ENCODE measurements at regions of chr9 and their contacts with region 1.

Region 1: GRCh38 chr9:132507746-132508469 is 74.5 kb upstream of the BARHL1 start:
- DNase-seq: peak; percentile 83
- ATAC-seq: peak; percentile 90
- H3K4me3 Mint-ChIP-seq: no peak overlapping the region
- H3K27ac Mint-ChIP-seq: peak overlapping the region; percentile 71
- H3K4me1 Mint-ChIP-seq: peaks cover 23% of the 10 kb centered on the region
- H3K27me3 Mint-ChIP-seq: peaks cover 18% of the 10 kb centered on the region

Region 2: DNA sequence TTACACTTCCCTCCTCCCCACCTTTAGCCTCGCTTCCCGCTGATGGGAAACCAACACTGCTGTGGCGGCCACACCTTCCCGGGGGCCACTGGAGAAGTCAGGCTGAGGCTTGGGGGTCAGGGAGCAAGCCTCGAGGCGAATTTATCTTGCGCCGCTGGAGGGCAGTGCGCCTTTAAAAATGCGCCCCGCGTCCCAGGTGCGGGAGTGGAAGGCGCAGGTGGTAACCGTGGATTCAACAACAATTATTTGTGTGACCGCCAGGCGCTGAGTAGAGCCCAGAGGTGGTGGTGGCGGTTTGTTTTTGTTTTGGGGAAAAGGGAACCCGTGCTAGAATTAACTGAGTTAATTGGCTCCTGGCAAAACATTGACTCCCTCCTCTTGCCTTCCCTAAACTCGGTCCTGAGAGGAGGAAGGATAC is 96.8 kb before region 1 on chr9:
- CTCF ChIA-PET with region 1: interaction called, 13 read pairs
- POLR2A ChIA-PET with region 1: no interaction called
- DNase-seq: peak; percentile 84
- ATAC-seq: peak; percentile 68
- H3K4me3 Mint-ChIP-seq: peak overlapping the region; percentile 64
- H3K27ac Mint-ChIP-seq: no peak overlapping the region
- H3K4me1 Mint-ChIP-seq: peaks cover 27% of the 10 kb centered on the region
- H3K27me3 Mint-ChIP-seq: peaks cover 48% of the 10 kb centered on the region

Region 3: DNA sequence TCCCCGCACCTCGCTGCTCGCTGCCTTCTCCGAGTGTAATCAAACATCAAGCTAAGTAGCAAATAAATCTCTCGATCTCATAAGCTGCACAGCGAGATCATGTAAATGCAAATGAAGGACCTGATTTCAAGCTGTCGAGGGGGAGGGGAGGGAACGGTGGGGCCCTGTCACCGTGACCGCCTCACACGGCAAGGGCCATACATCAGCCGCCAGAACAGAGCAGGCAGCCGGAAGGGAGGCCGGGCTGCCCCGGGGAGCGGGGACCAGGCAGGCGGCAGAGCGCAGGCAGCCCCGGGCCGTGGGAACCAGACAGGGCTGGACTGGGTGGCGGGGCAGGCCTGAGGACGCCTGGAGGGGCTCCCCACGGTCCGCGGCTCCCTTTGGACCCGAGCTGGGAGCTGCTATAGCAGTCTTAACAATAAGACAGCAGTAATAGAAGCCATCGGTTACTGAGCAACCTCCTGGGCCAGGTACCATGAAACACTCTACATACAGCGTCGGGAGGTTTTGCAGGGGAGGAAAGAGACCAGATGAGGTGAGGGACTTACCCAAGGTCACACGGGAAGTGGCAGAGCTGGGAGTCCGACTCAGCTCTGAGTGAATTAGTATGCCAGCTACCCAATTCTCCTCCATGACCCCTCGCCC is 21.1 kb before region 1 on chr9:
- CTCF ChIA-PET with region 1: interaction called, 34 read pairs
- POLR2A ChIA-PET with region 1: no interaction called
- DNase-seq: peak; percentile 79
- ATAC-seq: peak; percentile 91
- H3K4me3 Mint-ChIP-seq: peak overlapping the region; percentile 60
- H3K27ac Mint-ChIP-seq: peak overlapping the region; percentile 98
- H3K4me1 Mint-ChIP-seq: peaks cover 34% of the 10 kb centered on the region
- H3K27me3 Mint-ChIP-seq: peaks cover 48% of the 10 kb centered on the region

Region 4: DNA sequence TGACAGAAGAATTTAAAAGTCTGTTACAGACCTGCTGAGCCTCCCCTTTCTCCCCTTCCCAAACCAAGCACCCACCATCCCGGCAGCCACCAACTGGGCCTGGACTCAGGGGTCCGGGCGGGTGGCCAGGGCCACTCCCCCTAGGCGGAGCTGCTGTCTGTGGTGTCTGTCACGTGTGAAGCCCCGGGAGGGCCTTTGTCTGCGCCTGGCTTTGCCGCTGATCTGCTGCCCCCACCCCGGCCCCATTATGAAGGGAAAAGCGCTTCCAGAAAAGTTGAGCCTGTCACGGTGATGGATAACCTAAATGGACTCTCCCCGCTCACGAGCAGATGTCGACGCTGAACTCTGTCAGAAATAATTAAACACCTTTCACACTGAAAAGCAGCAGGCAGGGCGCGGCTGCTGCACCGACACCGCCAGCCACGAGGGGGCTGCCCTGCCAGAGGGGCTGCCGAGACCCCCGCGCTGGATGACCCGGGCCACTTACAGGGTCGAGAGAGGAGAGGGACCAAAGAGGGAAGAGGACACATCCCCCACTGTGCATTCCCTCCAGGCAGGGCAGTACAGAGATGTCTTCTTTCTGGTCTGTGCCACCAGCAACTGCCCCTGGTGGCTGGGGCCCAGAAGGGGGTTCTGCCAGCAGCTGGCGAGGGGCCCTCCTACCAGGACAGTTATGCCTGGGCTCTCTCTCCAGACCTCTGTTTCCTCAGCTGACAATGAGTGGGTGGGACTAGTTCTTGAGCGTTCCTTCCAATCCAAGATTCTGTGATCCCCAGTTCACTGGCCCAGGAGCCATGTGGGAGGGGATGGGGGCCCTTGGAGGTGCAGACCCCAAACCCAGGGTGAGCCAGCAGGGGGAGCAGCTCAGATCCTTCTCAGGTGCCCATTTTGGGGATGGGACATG is 38.5 kb after region 1 on chr9:
- CTCF ChIA-PET with region 1: no interaction called
- POLR2A ChIA-PET with region 1: no interaction called
- DNase-seq: no peak
- ATAC-seq: no peak
- H3K4me3 Mint-ChIP-seq: no peak overlapping the region
- H3K27ac Mint-ChIP-seq: no peak overlapping the region
- H3K4me1 Mint-ChIP-seq: peaks cover 3% of the 10 kb centered on the region
- H3K27me3 Mint-ChIP-seq: peaks cover 30% of the 10 kb centered on the region

Region 5: GRCh38 chr9:132575005-132575609 is 67.2 kb after region 1 on chr9:
- CTCF ChIA-PET with region 1: interaction called, 38 read pairs
- POLR2A ChIA-PET with region 1: no interaction called
- DNase-seq: peak; percentile 81
- ATAC-seq: peak; percentile 84
- H3K4me3 Mint-ChIP-seq: no peak overlapping the region
- H3K27ac Mint-ChIP-seq: no peak overlapping the region
- H3K4me1 Mint-ChIP-seq: no peaks in the 10 kb centered on the region
- H3K27me3 Mint-ChIP-seq: peaks cover 48% of the 10 kb centered on the region